ENCODE measurements at regions of chr20 and their contacts with region 1.

Region 1: GRCh38 chr20:39049684-39050554 is 87.8 kb downstream of the DHX35 start:
- DNase-seq: peak; percentile 59 to 90 (median 78)
- ATAC-seq: peak; percentile 91
- H3K4me3 ChIP-seq: peak overlapping the region; percentile 55 to 76
- H3K4me3 Mint-ChIP-seq: peak overlapping the region; percentile 85
- H3K27ac ChIP-seq: peak overlapping the region in 1 of 2 experiments; percentile 22
- H3K27ac Mint-ChIP-seq: peak overlapping the region; percentile 56
- H3K4me1 ChIP-seq: peaks cover 9% of the 10 kb centered on the region
- H3K4me1 Mint-ChIP-seq: peaks cover 9% of the 10 kb centered on the region
- H3K27me3 ChIP-seq: no peaks in the 10 kb centered on the region
- H3K27me3 Mint-ChIP-seq: peaks cover 8% of the 10 kb centered on the region
- CTCF ChIP-seq: peak; percentile 98

Region 2: GRCh38 chr20:38501861-38502436 is 548.0 kb before region 1 on chr20:
- CTCF ChIA-PET with region 1: no interaction called
- POLR2A ChIA-PET with region 1: no interaction called
- intact Hi-C with region 1: no loop called
- DNase-seq: no peak
- ATAC-seq: no peak
- H3K4me3 ChIP-seq: no peak overlapping the region
- H3K4me3 Mint-ChIP-seq: no peak overlapping the region
- H3K27ac ChIP-seq: no peak overlapping the region
- H3K27ac Mint-ChIP-seq: no peak overlapping the region
- H3K4me1 ChIP-seq: no peaks in the 10 kb centered on the region
- H3K4me1 Mint-ChIP-seq: peaks cover 3% of the 10 kb centered on the region
- H3K27me3 ChIP-seq: no peaks in the 10 kb centered on the region
- H3K27me3 Mint-ChIP-seq: no peaks in the 10 kb centered on the region
- CTCF ChIP-seq: no peak

Region 3: GRCh38 chr20:38645980-38646858 is 403.7 kb before region 1 on chr20:
- CTCF ChIA-PET with region 1: interaction called, 10 read pairs
- POLR2A ChIA-PET with region 1: no interaction called
- intact Hi-C with region 1: loop called in 1 of 2 experiments (anchors 1 kb)
- DNase-seq: peak; percentile 83 to 97 (median 91)
- ATAC-seq: peak; percentile 99
- H3K4me3 ChIP-seq: peak overlapping the region; percentile 13 to 25
- H3K4me3 Mint-ChIP-seq: peak overlapping the region; percentile 76
- H3K27ac ChIP-seq: no peak overlapping the region
- H3K27ac Mint-ChIP-seq: peak overlapping the region; percentile 28
- H3K4me1 ChIP-seq: peaks cover 4% of the 10 kb centered on the region
- H3K4me1 Mint-ChIP-seq: peaks cover 8% of the 10 kb centered on the region
- H3K27me3 ChIP-seq: peaks cover 8 to 11% of the 10 kb centered on the region in 2 experiments
- H3K27me3 Mint-ChIP-seq: peaks cover 30% of the 10 kb centered on the region
- CTCF ChIP-seq: peak; percentile 84

Region 4: GRCh38 chr20:38962044-38962927 is 87.6 kb before region 1 on chr20 and contains the start of gene DHX35:
- CTCF ChIA-PET with region 1: interaction called, 20 read pairs
- POLR2A ChIA-PET with region 1: no interaction called
- intact Hi-C with region 1: no loop called
- DNase-seq: peak; percentile 96 to 100 (median 98)
- ATAC-seq: peak; percentile 99
- H3K4me3 ChIP-seq: peak within 1 kb of the TSS; percentile 83 to 97
- H3K4me3 Mint-ChIP-seq: peak within 1 kb of the TSS; percentile 94
- H3K27ac ChIP-seq: peak within 1 kb of the TSS; percentile 76 to 82
- H3K27ac Mint-ChIP-seq: peak within 1 kb of the TSS; percentile 97
- H3K4me1 ChIP-seq: peaks cover 19% of the 10 kb centered on the region
- H3K4me1 Mint-ChIP-seq: peaks cover 28% of the 10 kb centered on the region
- H3K27me3 ChIP-seq: no peaks in the 10 kb centered on the region
- H3K27me3 Mint-ChIP-seq: no peaks in the 10 kb centered on the region
- CTCF ChIP-seq: no peak
- total RNA-seq, gene DHX35: 8.5 to 8.8 TPM

Region 5: DNA sequence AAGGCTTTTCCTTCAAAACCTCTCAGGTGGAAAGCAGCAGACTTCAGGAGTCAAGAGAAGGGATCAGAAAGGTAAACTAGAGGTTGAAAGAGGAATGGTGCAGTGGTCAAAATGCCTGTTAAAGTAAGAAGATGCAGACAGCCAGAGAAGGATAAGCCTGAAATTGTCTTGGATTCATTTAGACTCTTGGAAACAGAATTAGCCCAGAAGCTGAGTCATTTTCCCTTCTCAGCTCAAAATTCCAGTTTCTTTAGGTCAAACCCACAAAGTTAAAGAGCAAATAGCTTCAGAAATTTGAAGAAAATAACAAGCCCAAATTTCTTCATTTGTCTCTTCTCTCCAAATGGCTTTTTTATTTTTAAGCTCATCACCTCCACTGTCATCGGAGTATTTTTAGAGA is 13.9 kb before region 1 on chr20:
- CTCF ChIA-PET with region 1: interaction called, 56 read pairs
- POLR2A ChIA-PET with region 1: interaction called, 3 read pairs
- intact Hi-C with region 1: no loop called
- DNase-seq: no peak
- ATAC-seq: no peak
- H3K4me3 ChIP-seq: no peak overlapping the region
- H3K4me3 Mint-ChIP-seq: no peak overlapping the region
- H3K27ac ChIP-seq: no peak overlapping the region
- H3K27ac Mint-ChIP-seq: no peak overlapping the region
- H3K4me1 ChIP-seq: no peaks in the 10 kb centered on the region
- H3K4me1 Mint-ChIP-seq: no peaks in the 10 kb centered on the region
- H3K27me3 ChIP-seq: no peaks in the 10 kb centered on the region
- H3K27me3 Mint-ChIP-seq: no peaks in the 10 kb centered on the region
- CTCF ChIP-seq: no peak

Region 6: DNA sequence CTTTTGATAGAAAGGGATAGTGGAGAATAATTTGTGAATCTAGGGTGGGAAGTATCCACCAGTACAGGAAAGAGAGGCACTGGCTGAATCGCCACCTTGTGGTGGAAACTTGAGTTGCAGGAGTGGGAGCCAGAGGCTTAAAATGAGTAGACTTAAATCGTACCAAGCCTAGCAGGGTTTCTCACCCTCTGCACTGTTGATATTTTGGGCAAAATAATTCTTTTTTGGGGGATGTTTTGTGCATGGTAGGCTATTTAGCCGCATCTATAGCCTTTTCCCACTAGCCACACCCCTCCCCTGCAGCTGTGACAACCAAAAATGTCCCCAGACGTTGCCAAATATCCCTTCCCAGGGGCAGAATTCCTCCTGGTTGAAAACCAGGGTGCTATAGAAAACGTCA is 31.3 kb after region 1 on chr20:
- CTCF ChIA-PET with region 1: interaction called, 391 read pairs
- POLR2A ChIA-PET with region 1: interaction called, 9 read pairs
- intact Hi-C with region 1: loop called (anchors 1 kb)
- DNase-seq: peak; percentile 59 to 87 (median 80)
- ATAC-seq: peak; percentile 76
- H3K4me3 ChIP-seq: no peak overlapping the region
- H3K4me3 Mint-ChIP-seq: no peak overlapping the region
- H3K27ac ChIP-seq: no peak overlapping the region
- H3K27ac Mint-ChIP-seq: no peak overlapping the region
- H3K4me1 ChIP-seq: no peaks in the 10 kb centered on the region
- H3K4me1 Mint-ChIP-seq: peaks cover 6% of the 10 kb centered on the region
- H3K27me3 ChIP-seq: no peaks in the 10 kb centered on the region
- H3K27me3 Mint-ChIP-seq: peaks cover 23% of the 10 kb centered on the region
- CTCF ChIP-seq: peak; percentile 82

Region 7: DNA sequence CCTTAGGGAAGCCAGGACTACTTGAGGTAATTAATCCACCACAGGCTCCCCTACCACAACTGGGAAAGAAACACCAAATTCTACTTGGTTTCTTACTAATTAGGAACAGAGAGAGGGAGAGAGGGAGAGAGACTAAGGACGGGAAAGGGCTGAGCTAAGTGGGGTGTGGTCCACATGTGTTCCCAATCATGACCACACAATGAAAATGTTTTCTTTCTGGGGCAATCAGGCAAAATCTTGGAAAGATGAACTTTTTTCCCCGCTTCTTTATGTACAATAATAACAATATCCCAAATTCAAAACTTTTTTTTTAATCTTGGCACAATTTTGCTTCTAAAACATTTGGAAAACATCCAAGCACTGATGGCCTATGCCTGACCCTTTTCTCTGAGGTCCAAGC is 904.7 kb after region 1 on chr20:
- CTCF ChIA-PET with region 1: no interaction called
- POLR2A ChIA-PET with region 1: no interaction called
- intact Hi-C with region 1: no loop called
- DNase-seq: no peak
- ATAC-seq: no peak
- H3K4me3 ChIP-seq: no peak overlapping the region
- H3K4me3 Mint-ChIP-seq: no peak overlapping the region
- H3K27ac ChIP-seq: no peak overlapping the region
- H3K27ac Mint-ChIP-seq: no peak overlapping the region
- H3K4me1 ChIP-seq: no peaks in the 10 kb centered on the region
- H3K4me1 Mint-ChIP-seq: no peaks in the 10 kb centered on the region
- H3K27me3 ChIP-seq: no peaks in the 10 kb centered on the region
- H3K27me3 Mint-ChIP-seq: no peaks in the 10 kb centered on the region
- CTCF ChIP-seq: no peak

Region 8: GRCh38 chr20:40962730-40963504 is 1913.0 kb after region 1 on chr20:
- CTCF ChIA-PET with region 1: no interaction called
- POLR2A ChIA-PET with region 1: no interaction called
- intact Hi-C with region 1: loop called in 1 of 2 experiments (anchors 2 kb)
- DNase-seq: peak; percentile 48 to 86 (median 74)
- ATAC-seq: peak; percentile 86
- H3K4me3 ChIP-seq: no peak overlapping the region
- H3K4me3 Mint-ChIP-seq: no peak overlapping the region
- H3K27ac ChIP-seq: no peak overlapping the region
- H3K27ac Mint-ChIP-seq: no peak overlapping the region
- H3K4me1 ChIP-seq: peaks cover 16% of the 10 kb centered on the region
- H3K4me1 Mint-ChIP-seq: peaks cover 8% of the 10 kb centered on the region
- H3K27me3 ChIP-seq: no peaks in the 10 kb centered on the region
- H3K27me3 Mint-ChIP-seq: no peaks in the 10 kb centered on the region
- CTCF ChIP-seq: peak; percentile 88